ENCODE measurements at regions of chr3 and their contacts with region 1.

Region 1: DNA sequence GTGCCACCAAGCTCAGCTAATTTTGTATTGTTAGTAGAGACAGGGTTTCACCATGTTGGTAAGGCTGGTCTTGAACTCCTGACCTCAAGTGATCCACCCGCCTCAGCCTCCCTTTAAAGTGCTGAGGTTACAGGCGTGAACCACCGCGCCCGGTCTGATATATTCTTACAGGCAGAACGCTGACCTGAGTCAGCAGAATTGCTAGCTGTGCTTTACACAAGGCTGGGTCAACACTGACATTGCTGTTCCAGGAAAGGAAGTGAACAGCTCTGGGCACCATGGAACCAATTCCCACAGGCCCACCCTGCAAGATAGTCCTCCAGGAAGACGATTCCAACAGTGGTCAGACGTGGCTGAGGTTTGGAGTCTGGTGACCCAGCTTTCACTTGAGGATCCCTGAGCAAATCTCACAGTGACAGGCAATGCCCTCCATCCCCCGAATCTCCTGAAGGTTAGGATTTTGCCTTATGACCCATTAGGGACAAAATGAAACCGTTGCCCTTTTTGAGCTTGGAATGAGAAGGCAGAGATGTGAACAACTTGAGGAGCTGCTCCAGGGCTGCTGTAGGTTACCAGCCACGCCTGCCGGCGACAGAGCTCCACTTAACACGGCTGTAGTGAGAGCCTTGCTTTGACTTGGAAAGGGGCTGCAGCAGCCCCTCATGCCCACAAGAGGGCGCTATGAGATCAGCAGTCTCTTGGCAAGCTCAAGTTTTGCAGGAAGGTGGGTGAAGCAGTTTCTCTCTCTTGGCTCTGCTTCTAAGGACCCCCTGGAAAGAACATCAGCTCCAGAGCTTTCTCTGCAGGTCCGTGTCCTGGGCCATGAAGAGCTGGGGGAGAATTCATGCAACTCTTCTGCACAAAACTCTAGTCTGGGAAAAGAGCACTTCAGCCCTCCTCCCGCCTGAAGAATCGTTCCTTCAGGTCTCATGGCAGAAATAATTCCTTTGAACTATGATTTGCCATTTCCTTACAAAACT is 74.1 kb downstream of the SENP2 start:
- DNase-seq: peak; percentile 64
- H3K4me3 ChIP-seq: no peak overlapping the region
- H3K27ac ChIP-seq: peak overlapping the region; percentile 47
- H3K27me3 ChIP-seq: no peaks in the 10 kb centered on the region
- CTCF ChIP-seq: peak; percentile 99

Region 2: DNA sequence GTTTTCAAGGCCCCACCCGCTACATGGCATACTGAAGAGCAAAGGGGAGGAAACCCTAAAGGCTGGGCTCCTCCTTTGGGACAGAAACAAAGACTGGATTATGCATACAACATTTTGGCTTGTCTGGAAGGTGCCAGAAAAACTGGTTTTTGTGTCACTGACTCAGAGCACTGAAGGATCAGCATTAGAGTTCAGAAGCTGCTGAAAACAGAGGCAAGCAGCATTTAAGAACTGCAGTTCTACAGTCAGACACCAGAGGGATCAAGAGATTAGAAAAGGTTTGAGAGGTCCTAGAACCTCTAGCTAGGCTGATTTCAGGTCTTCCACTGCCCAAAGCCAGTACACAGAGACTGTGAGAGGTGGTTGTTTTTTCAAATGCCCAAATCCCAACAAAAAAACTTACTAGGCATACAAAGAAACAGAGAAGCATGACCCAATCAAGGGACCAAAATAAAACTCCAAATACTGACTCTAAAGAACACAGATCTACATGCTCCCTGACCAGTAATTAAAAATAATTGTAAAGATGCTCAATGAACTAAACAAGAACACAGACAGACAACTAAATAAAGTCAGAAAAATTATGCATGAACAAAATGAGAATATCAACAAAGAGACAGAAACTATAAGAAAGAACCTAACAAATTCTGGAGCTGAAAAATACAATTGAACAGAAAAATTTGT is 17.1 kb after region 1 on chr3:
- CTCF ChIA-PET with region 1: interaction called, 102 read pairs
- POLR2A ChIA-PET with region 1: no interaction called
- DNase-seq: peak; percentile 56
- H3K4me3 ChIP-seq: no peak overlapping the region
- H3K27ac ChIP-seq: no peak overlapping the region
- H3K27me3 ChIP-seq: no peaks in the 10 kb centered on the region
- CTCF ChIP-seq: peak; percentile 84

Region 3: DNA sequence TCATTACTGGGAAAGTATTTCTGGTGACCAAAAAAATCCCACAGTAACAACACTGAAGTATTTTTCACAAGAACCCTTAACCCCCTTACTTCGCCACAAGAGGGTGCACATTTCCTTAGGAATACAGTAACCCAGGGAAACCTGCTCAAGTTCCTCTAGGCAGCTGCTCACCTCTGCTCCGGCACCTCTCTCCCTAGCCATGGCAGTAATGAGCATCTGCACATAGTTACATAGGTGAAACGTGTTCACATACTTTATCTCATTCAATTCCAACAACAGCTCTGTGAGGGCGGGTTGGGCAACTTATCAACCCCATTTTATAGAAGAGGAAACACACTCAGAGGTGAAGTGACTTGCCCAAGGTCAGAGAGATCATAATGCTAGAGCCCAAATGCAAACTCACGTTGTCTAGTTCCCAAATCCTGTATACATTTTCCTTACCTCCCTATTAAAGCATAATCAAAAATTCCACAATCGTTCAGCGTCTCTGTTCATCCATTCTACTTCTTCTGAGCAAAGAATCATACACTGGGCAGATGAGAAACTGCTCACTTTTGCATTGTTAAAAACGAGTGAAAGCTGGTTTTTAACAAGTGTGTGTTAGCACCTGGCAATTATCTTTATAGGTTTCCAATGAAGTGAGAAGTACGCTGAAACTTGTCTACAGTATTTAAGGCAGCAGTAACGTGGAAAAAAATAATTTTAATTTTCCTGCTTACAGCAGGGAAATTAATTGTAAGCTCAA is 73.9 kb after region 1 on chr3:
- CTCF ChIA-PET with region 1: interaction called, 41 read pairs
- POLR2A ChIA-PET with region 1: interaction called, 4 read pairs
- DNase-seq: peak; percentile 72
- H3K4me3 ChIP-seq: no peak overlapping the region
- H3K27ac ChIP-seq: no peak overlapping the region
- H3K27me3 ChIP-seq: no peaks in the 10 kb centered on the region
- CTCF ChIP-seq: peak; percentile 76

Region 4: GRCh38 chr3:185807445-185808068 is 147.3 kb after region 1 on chr3:
- CTCF ChIA-PET with region 1: interaction called, 11 read pairs
- POLR2A ChIA-PET with region 1: no interaction called
- DNase-seq: no peak
- H3K4me3 ChIP-seq: no peak overlapping the region
- H3K27ac ChIP-seq: no peak overlapping the region
- H3K27me3 ChIP-seq: no peaks in the 10 kb centered on the region
- CTCF ChIP-seq: no peak

Region 5: GRCh38 chr3:185856652-185857051 is 196.4 kb after region 1 on chr3:
- CTCF ChIA-PET with region 1: interaction called, 13 read pairs
- POLR2A ChIA-PET with region 1: no interaction called
- DNase-seq: no peak
- H3K4me3 ChIP-seq: no peak overlapping the region
- H3K27ac ChIP-seq: no peak overlapping the region
- H3K27me3 ChIP-seq: peaks cover 3% of the 10 kb centered on the region
- CTCF ChIP-seq: no peak

Region 6: GRCh38 chr3:185929192-185930151 is 269.2 kb after region 1 on chr3:
- CTCF ChIA-PET with region 1: interaction called, 99 read pairs
- POLR2A ChIA-PET with region 1: no interaction called
- DNase-seq: no peak
- H3K4me3 ChIP-seq: peak overlapping the region; percentile 3
- H3K27ac ChIP-seq: no peak overlapping the region
- H3K27me3 ChIP-seq: no peaks in the 10 kb centered on the region
- CTCF ChIP-seq: no peak

Region 7: DNA sequence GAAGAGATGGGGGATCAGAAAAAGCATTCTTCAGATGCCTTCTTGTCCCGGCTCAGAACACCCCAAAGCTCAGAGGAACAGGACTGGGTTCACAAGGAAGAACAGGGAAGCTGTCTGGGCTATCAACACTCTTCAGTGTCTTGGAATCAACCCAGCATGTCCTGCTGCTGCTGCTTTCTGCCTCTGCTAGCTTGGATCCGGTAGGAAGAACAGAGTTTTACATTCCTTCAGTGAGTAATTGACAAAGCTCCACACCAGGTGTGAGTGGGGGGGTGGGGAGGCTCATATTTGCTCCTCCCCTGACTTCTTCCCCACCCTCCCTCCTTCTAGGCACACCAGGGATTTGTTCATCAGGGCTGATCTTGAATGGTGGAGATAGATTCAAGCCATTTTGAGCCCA is 461.7 kb after region 1 on chr3:
- CTCF ChIA-PET with region 1: no interaction called
- POLR2A ChIA-PET with region 1: no interaction called
- DNase-seq: no peak
- H3K4me3 ChIP-seq: no peak overlapping the region
- H3K27ac ChIP-seq: no peak overlapping the region
- H3K27me3 ChIP-seq: peaks cover 21% of the 10 kb centered on the region
- CTCF ChIP-seq: no peak